Activated B cell treated with CpG ODN at 0.5 μM for 24 hours (primary cell): ENCODE measurements at regions of chr6 and their contacts with region 1.

Region 1: DNA sequence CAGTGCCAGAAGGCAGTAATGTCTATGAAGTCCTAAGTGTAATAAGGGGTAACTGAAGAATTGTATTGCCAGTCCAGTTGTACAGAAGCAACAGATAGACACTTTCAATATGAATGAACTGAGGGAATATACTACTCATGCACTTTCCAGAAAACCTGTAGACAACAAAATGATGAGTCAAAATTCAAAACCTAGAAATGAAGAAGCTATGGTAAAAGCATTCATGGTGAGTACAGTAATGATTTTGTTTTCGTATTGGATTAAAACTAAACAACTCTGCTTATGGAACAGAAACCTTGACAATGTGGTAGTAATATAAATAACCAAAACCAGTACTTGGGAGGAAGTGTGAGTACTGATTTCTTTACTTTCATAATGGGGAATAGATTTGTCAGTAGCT is 35.0 kb downstream of the ARMC2 start:
- DNase-seq: no peak
- ATAC-seq: peak; percentile 40
- H3K4me3 Mint-ChIP-seq: no peak overlapping the region
- H3K27ac Mint-ChIP-seq: no peak overlapping the region
- H3K4me1 Mint-ChIP-seq: peaks cover 27% of the 10 kb centered on the region
- H3K27me3 Mint-ChIP-seq: no peaks in the 10 kb centered on the region
- CTCF ChIP-seq: no peak

Region 2: DNA sequence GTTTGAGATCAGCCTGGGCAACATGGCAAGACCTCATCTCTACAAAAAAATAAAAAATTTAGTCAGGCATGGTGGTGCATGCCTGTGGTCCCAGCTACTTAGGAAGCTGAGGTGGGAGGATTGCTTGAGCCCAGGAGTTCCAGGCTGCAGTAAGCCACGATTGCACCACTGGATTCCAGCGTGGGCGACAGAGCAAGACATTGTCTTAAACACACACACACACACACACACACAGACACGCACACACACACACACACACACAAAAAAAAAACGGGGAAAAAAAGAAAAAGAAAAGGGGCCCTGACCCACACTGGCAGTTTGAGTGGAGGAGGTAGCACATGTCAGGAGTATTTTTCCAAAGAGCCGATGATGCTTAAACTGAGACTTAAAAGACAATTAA is 466.1 kb before region 1 on chr6:
- CTCF ChIA-PET with region 1: no interaction called
- POLR2A ChIA-PET with region 1: no interaction called
- intact Hi-C with region 1: no loop called
- DNase-seq: no peak
- ATAC-seq: no peak
- H3K4me3 Mint-ChIP-seq: no peak overlapping the region
- H3K27ac Mint-ChIP-seq: no peak overlapping the region
- H3K4me1 Mint-ChIP-seq: no peaks in the 10 kb centered on the region
- H3K27me3 Mint-ChIP-seq: no peaks in the 10 kb centered on the region
- CTCF ChIP-seq: no peak

Region 3: GRCh38 chr6:108476847-108477430 is 406.2 kb before region 1 on chr6:
- CTCF ChIA-PET with region 1: no interaction called
- POLR2A ChIA-PET with region 1: no interaction called
- intact Hi-C with region 1: no loop called
- DNase-seq: no peak
- ATAC-seq: no peak
- H3K4me3 Mint-ChIP-seq: no peak overlapping the region
- H3K27ac Mint-ChIP-seq: no peak overlapping the region
- H3K4me1 Mint-ChIP-seq: peaks cover 2% of the 10 kb centered on the region
- H3K27me3 Mint-ChIP-seq: no peaks in the 10 kb centered on the region
- CTCF ChIP-seq: no peak

Region 4: GRCh38 chr6:108699290-108700041 is 183.7 kb before region 1 on chr6:
- CTCF ChIA-PET with region 1: no interaction called
- POLR2A ChIA-PET with region 1: no interaction called
- intact Hi-C with region 1: no loop called
- DNase-seq: no peak
- ATAC-seq: no peak
- H3K4me3 Mint-ChIP-seq: no peak overlapping the region
- H3K27ac Mint-ChIP-seq: no peak overlapping the region
- H3K4me1 Mint-ChIP-seq: no peaks in the 10 kb centered on the region
- H3K27me3 Mint-ChIP-seq: no peaks in the 10 kb centered on the region
- CTCF ChIP-seq: no peak

Region 5: DNA sequence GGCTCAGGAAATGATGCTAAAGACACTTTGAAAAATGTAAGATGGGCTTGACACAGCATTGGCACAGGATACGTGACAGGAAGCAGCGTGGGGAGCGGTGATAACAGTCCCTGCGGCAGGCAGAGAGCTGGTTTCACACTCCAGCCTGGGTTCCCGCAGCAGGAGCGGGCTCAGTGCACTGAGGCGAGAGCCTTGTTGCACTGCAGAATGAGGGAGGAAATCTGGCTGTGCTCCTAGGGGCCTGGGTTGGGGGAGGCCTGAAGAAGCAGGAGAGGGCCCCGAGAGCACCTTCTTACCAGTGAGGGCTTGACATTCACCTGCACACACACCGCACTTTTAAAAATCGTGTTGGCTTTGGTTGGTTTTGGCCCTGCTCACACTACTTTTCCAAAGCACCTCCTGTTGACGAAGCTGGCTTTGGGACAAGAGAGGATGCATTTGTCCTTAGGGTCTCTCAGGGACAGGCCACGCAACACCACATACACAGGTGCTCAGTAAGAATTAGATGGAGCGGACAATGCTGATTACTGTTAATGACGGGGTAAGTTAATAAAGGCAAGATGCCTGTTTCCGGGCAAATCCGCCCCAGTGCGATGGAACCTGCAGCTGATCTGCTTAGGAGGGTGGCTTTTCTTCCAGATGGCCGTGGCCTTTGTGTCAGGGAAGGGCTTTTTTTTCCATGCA is 84.4 kb before region 1 on chr6:
- CTCF ChIA-PET with region 1: no interaction called
- POLR2A ChIA-PET with region 1: no interaction called
- intact Hi-C with region 1: loop called (anchors 5 kb)
- DNase-seq: no peak
- ATAC-seq: no peak
- H3K4me3 Mint-ChIP-seq: no peak overlapping the region
- H3K27ac Mint-ChIP-seq: no peak overlapping the region
- H3K4me1 Mint-ChIP-seq: peaks cover 12% of the 10 kb centered on the region
- H3K27me3 Mint-ChIP-seq: peaks cover 11% of the 10 kb centered on the region
- CTCF ChIP-seq: no peak

Region 6: GRCh38 chr6:109279628-109280027 is 396.5 kb after region 1 on chr6:
- CTCF ChIA-PET with region 1: no interaction called
- POLR2A ChIA-PET with region 1: no interaction called
- intact Hi-C with region 1: no loop called
- DNase-seq: no peak
- ATAC-seq: no peak
- H3K4me3 Mint-ChIP-seq: no peak overlapping the region
- H3K27ac Mint-ChIP-seq: no peak overlapping the region
- H3K4me1 Mint-ChIP-seq: peaks cover 3% of the 10 kb centered on the region
- H3K27me3 Mint-ChIP-seq: peaks cover 1% of the 10 kb centered on the region
- CTCF ChIP-seq: no peak